MCF 10A (cell line): ENCODE measurements at regions of chr17 and their contacts with region 1.

Region 1: GRCh38 chr17:65137021-65137991 is at the start of gene RGS9:
- DNase-seq: peak; percentile 75
- H3K4me3 Mint-ChIP-seq: peak within 1 kb of the TSS; percentile 74
- H3K27ac Mint-ChIP-seq: no peak within 1 kb of the TSS
- H3K4me1 Mint-ChIP-seq: peaks cover 11% of the 10 kb centered on the region
- H3K27me3 Mint-ChIP-seq: peaks cover 31% of the 10 kb centered on the region
- CTCF ChIP-seq: peak; percentile 94
- total RNA-seq, gene RGS9: 0.49 and 0.61 TPM in 2 replicates

Region 2: GRCh38 chr17:65093930-65094329 is 43.4 kb before region 1 on chr17:
- CTCF ChIA-PET with region 1: no interaction called
- POLR2A ChIA-PET with region 1: no interaction called
- intact Hi-C with region 1: no loop called
- DNase-seq: no peak
- H3K4me3 Mint-ChIP-seq: no peak overlapping the region
- H3K27ac Mint-ChIP-seq: no peak overlapping the region
- H3K4me1 Mint-ChIP-seq: peaks cover 6% of the 10 kb centered on the region
- H3K27me3 Mint-ChIP-seq: no peaks in the 10 kb centered on the region
- CTCF ChIP-seq: no peak

Region 3: DNA sequence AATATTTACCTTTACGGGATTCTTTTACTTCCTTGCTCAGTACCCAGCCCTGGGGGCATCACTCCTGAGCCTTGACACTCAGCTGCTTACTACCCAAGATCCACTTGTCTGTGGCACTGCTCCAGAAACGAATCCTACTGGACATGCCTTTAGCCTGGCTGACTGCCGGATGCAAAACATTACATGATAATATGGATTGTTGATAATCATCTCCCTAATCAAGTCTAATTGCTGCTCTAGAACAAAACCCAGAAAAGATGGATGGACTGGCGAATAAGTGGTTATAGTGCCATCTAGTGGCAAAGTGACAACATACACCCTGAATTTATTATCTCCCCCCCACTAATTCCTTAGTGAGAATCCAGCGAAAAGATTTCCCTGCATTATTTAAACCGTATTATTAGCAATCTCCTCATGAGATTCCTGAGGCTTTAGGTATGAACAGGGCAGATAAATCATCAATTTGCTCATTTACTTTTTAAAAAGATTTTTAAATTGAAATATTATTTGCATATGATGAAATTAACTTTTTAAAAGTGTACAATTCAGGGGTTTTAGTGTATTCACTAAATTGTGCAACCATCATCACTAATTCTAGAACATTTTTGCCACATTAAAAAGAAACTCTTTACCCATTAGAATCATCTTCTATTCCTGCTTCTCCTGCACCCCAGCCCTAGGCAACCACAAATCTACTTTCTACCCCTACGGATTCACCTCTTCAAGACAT is 61.5 kb after region 1 on chr17:
- CTCF ChIA-PET with region 1: interaction called, 4 read pairs
- POLR2A ChIA-PET with region 1: no interaction called
- intact Hi-C with region 1: loop called (anchors 1 kb)
- DNase-seq: peak; percentile 63
- H3K4me3 Mint-ChIP-seq: no peak overlapping the region
- H3K27ac Mint-ChIP-seq: no peak overlapping the region
- H3K4me1 Mint-ChIP-seq: peaks cover 8% of the 10 kb centered on the region
- H3K27me3 Mint-ChIP-seq: no peaks in the 10 kb centered on the region
- CTCF ChIP-seq: peak; percentile 63